AG04450 (cell line): ENCODE measurements at regions of chr19 and their contacts with region 1.

Region 1: DNA sequence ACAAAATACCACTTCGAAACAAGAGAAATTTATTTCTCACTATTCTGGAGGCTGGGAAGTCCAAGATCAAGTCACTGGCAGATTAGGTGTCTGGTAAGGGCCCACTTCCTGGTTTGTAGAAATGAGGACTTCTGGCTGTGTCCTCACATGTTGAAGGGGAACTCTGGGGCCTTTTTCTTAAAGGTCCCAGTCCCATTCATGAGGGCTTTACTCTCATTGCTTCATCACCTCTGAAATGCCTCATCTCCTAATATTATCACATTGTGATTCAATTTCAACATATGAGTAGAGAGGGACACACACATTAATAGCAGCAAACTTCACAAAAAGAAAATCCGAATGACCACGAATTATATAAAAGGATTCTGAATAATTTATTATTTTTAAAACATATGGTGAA is 21.6 kb upstream of the SIGLEC14 start:
- DNase-seq: no peak
- H3K4me3 ChIP-seq: no peak overlapping the region
- H3K27ac ChIP-seq: no peak overlapping the region
- H3K27me3 ChIP-seq: no peaks in the 10 kb centered on the region
- CTCF ChIP-seq: no peak

Region 2: GRCh38 chr19:51681321-51682168 is 13.3 kb after region 1 on chr19:
- CTCF ChIA-PET with region 1: interaction called, 11 read pairs
- POLR2A ChIA-PET with region 1: no interaction called
- DNase-seq: no peak
- H3K4me3 ChIP-seq: no peak overlapping the region
- H3K27ac ChIP-seq: no peak overlapping the region
- H3K27me3 ChIP-seq: no peaks in the 10 kb centered on the region
- CTCF ChIP-seq: no peak